ENCODE measurements at regions of chr16 and their contacts with region 1.

Region 1: GRCh38 chr16:7921345-7921744 is 588.7 kb downstream of the RBFOX1 start:
- DNase-seq: no peak
- ATAC-seq: no peak
- H3K4me3 ChIP-seq: no peak overlapping the region
- H3K27ac ChIP-seq: no peak overlapping the region
- H3K4me1 ChIP-seq: no peaks in the 10 kb centered on the region
- H3K27me3 ChIP-seq: peaks cover 0 to 3% (median 0%) of the 10 kb centered on the region in 7 donors
- CTCF ChIP-seq: peak in 3 of 9 donors; percentile 12 to 22 (median 15)

Region 2: GRCh38 chr16:7849841-7850240 is 71.5 kb before region 1 on chr16:
- intact Hi-C with region 1: no loop called
- DNase-seq: no peak
- ATAC-seq: no peak
- H3K4me3 ChIP-seq: no peak overlapping the region
- H3K27ac ChIP-seq: no peak overlapping the region
- H3K4me1 ChIP-seq: no peaks in the 10 kb centered on the region
- H3K27me3 ChIP-seq: peaks cover 0 to 12% (median 0%) of the 10 kb centered on the region in 7 donors
- CTCF ChIP-seq: no peak

Region 3: DNA sequence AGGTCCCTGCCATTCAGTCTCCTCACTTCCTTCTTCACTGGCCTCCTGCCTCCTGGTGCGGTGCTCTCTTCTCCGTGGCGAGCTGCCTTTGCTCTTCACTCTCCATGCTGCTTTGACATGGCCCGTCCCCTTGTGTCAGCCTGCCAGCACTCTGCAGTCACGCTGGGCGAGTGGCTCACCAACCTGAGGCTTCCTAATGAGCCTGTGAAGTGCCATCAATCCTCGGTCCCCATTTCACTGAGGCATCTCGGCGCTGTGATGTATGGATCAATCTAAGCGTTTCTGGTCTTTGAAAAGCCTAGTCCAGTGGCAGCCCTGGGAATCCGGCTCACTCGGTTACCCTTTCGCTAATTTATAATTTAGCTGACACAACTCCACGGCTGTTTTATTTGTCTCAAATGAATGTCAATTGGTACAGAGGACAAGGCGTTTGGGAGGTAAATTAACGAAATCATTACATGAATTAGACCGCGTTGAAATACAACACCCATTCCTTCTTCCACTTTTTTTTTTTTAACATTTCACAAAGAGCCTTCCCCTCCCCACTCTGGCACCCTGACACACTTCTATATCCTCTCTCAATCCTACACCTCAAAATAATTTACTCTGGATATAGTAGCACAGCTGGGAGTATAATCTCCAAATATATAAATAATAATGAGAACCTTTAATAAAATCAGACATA is 58.2 kb after region 1 on chr16:
- intact Hi-C with region 1: loop called in 1 of 10 experiments (anchors 10 kb)
- DNase-seq: no peak
- ATAC-seq: no peak
- H3K4me3 ChIP-seq: no peak overlapping the region
- H3K27ac ChIP-seq: no peak overlapping the region
- H3K4me1 ChIP-seq: no peaks in the 10 kb centered on the region
- H3K27me3 ChIP-seq: no peaks in the 10 kb centered on the region
- CTCF ChIP-seq: no peak

Measured in heart right ventricle (tissue), 16 donors.